Posterior cingulate gyrus (tissue), 11 donors: ENCODE measurements at regions of chr20 and their contacts with region 1.

Region 1: DNA sequence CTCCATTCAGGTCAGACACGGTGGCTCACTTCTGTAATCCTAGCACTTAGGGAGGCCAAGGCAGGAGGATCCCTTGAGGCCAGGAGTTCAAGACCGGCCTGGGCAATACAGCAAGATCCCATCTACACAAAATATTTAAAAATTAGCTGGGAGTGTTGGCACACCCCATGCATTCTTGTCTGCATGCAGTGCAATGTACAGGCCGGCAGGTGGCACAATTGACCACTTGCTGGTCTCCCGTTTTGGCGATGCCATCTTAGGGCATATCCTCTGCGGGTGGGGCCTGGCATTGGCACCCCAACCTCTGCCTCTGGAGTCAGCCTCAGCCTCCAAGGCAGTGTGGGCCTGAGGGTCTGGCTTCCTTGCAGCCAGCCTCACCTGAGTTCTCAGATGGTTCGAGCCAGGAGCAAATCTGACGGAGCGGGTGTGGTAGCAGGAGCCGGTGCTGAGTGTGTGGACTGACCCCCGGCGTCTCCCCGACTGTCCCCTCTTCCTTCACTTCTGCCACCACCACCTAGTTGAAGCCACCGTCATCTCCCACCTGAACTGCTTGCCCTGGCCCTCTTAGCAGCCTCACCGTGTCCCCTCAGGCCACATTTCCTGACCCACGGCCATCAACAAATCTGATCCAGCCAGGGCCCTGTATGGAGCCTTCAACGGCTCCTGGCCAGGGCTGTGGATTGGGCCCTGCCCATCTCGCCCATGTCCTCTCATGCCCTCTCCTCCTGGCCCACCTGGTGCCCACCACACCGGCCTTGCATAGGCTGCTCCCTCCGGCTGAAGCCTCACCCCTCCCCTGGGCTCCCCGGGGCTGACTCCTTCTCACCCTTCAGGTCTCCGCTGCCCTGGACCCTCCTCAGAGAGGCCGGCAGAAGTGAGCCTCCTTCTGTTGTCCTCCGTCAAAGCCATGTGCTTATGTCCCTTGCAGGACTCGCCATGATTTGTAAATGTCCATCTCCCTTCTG is 44.0 kb downstream of the EFCAB8 start:
- DNase-seq: peak; percentile 57 to 96 (median 76)

Region 2: GRCh38 chr20:32558526-32558925 is 344.2 kb before region 1 on chr20:
- intact Hi-C with region 1: no loop called
- DNase-seq: peak in 1 of 10 donors; percentile 50

Region 3: DNA sequence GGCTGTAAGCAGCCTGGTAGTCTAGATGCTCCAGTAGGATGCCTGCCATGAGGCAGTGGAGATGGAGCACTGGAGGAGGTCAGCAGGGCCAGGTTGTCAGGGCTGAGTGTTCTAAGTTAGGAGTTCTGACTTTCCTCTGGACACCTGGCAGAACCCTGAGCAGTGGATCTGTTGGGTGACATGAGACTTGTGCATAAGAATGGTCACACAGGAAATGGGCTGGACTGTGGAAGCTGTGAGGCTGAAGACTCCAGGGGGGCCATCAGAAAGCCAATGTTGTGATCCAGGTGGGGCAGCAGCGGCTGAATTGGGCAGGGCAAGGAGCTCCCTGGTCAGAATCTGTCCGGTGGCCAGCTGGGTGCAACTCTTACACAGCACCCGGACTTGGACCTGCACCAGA is 205.1 kb before region 1 on chr20:
- intact Hi-C with region 1: no loop called
- DNase-seq: peak in 1 of 10 donors; percentile 30

Region 4: DNA sequence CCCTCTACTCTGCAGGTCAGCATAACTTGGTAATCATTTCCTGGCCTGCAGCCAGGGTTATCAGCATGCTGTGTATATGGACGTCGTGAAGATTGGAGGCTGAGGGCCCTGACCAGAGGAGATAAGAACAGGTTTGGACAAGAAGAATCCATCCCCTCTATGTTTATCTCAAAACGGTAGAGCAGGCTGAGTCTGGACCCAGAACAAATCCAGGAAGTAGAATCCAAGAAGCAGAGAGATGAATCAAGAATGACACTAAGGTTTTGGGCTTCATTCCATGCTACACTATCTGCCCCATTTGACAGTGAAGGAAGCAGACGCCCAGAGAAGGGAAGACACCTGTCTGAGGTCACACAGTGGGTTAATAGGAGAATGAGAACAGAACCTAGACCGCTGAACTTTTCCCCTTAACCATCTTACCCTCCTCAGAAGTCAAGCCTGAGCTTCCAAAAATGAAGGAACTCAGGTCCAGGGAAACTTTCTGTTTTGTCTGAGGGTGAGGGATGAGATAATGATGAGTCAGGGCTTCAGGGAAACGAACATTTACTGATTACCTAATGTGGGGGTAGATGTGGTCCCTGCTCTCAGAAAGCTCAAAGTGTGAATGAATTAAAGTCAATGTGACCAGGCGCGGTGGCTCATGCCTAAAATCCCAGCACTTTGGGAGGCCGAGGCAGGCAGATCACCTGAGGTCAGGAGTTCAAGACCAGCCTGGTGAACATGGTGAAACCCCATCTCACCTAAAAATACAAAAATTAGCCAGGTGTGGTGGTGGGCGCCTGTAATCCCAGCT is 150.1 kb before region 1 on chr20:
- intact Hi-C with region 1: no loop called
- DNase-seq: peak in 1 of 10 donors; percentile 12

Region 5: DNA sequence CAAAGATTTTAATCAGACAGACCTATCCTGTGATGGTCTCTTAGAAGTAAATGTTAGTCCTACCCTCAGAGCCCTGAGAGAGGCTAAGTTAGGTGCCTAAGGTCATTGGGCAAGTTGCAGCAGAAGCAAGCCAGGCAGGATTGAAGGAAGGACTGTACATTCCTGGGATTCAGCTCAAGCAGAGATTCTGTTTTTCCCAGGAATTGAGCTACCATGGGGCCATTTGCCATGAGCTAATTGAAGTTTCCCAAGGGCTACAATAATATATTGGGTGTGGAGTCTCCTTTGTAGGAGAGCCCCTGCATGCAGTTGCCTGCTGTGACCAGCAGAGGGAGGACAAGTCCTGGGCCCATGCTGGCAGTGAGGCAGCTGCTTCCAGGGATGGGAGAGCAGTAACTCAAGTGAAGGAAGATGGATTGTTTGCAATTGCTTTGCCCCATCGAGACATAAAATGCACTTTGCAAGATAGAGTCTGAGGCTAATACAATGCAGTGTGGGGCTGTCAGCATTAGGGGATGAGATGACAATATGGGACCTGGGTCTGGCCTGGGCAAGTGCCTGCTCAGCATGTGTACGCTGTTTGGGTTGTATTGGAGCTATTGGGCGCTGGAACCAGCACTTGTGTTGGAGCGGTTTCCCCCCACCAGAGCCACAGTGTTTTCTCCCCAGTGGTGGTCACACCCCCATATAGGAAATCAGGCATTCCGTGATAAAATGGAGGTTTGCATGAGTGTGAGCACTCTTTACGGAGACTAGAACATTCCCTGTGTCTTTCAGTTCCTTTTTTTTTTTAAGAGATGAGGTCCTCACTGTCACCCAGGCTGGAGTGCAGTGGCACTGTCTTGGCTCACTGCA is 112.6 kb before region 1 on chr20:
- intact Hi-C with region 1: loop called (anchors 5 kb)
- DNase-seq: peak; percentile 61 to 98 (median 86)

Region 6: GRCh38 chr20:32982617-32983458 is 80.1 kb after region 1 on chr20:
- intact Hi-C with region 1: loop called (anchors 5 kb)
- DNase-seq: peak in 8 of 10 donors; percentile 19 to 92 (median 52)

Region 7: GRCh38 chr20:33076662-33077372 is 174.1 kb after region 1 on chr20:
- intact Hi-C with region 1: loop called (anchors 5 kb)
- DNase-seq: peak in 2 of 10 donors; percentile 35 to 78

Region 8: GRCh38 chr20:33097001-33097400 is 194.3 kb after region 1 on chr20:
- intact Hi-C with region 1: loop called (anchors 1 kb)
- DNase-seq: no peak

Region 9: DNA sequence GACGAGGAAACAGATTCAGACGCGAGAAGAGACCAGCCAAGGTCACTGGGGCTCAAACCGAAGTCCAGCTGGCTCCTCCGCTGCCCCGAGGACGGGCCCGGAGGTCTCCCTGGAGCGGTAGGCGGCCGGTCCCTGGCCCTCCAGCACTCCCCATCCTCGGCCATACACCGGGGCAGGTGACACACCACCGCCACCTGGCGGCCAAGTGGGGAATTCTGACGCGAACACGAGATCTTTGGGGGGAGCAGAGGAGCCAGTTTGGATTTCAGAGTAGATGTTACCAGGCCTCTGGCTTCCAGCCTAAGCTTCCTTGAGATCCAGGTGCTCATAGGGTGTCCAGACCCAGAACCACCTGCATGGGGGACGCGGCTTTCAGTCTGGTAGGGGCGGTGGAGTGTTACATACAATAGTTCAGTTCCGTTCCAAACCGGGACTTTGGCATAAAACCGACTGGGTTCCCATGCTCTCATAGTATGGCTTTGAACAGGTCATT is 396.4 kb after region 1 on chr20:
- intact Hi-C with region 1: loop called (anchors 2 kb)
- DNase-seq: peak; percentile 41 to 96 (median 78)